Calu3 (cell line): ENCODE measurements at regions of chr10 and their contacts with region 1.

Region 1: GRCh38 chr10:127424594-127425264 is 124.4 kb upstream of the NPS start:
- DNase-seq: no peak
- H3K4me3 Mint-ChIP-seq: no peak overlapping the region
- H3K27ac Mint-ChIP-seq: no peak overlapping the region
- H3K4me1 Mint-ChIP-seq: no peaks in the 10 kb centered on the region
- H3K27me3 Mint-ChIP-seq: no peaks in the 10 kb centered on the region
- CTCF ChIP-seq: no peak

Region 2: DNA sequence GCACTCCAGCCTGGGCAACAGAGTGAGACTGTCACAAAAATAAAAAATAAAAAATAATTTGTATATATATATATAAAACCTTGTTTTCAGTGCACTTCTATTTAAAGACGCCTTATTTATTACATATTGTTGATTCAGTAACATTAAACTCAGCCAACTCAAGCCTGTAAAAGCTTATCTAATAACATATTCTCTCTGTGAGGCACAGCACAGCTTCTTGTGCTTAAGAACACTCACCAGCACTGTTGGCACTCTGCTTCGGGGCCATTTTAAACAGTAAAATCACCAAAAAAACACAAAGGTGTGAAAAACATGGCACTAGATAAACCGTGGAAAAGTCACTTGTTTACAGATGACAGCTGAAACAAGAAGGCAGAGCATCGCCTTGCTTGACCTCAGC is 665.2 kb before region 1 on chr10:
- CTCF ChIA-PET with region 1: interaction called, 12 read pairs
- intact Hi-C with region 1: no loop called
- DNase-seq: no peak
- H3K4me3 Mint-ChIP-seq: no peak overlapping the region
- H3K27ac Mint-ChIP-seq: no peak overlapping the region
- H3K4me1 Mint-ChIP-seq: no peaks in the 10 kb centered on the region
- H3K27me3 Mint-ChIP-seq: no peaks in the 10 kb centered on the region
- CTCF ChIP-seq: no peak

Region 3: DNA sequence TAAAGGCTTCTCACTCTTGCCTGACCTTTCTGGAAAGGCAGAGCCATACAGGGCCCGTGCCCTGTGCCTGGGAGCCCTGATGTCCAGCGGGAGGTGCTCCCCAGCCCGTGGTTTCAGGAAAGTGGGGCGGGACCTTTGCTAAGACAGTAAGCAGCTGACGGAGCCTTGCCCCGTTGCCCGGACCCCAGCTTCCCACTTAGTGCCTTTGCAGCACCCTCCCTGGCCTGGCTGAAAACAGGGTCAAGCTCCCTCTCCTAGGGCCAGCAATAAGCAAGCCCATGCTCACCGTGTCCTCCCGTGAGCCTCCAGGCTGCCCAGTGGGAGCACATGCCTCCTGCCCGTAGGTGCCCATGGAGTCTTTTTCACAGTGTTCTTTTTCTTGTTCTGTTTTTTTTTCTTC is 41.2 kb before region 1 on chr10:
- CTCF ChIA-PET with region 1: no interaction called
- intact Hi-C with region 1: no loop called
- DNase-seq: no peak
- H3K4me3 Mint-ChIP-seq: no peak overlapping the region
- H3K27ac Mint-ChIP-seq: no peak overlapping the region
- H3K4me1 Mint-ChIP-seq: no peaks in the 10 kb centered on the region
- H3K27me3 Mint-ChIP-seq: no peaks in the 10 kb centered on the region
- CTCF ChIP-seq: no peak